Endothelial cell of umbilical vein (primary cell): ENCODE measurements at regions of chr3 and their contacts with region 1.

Region 1: DNA sequence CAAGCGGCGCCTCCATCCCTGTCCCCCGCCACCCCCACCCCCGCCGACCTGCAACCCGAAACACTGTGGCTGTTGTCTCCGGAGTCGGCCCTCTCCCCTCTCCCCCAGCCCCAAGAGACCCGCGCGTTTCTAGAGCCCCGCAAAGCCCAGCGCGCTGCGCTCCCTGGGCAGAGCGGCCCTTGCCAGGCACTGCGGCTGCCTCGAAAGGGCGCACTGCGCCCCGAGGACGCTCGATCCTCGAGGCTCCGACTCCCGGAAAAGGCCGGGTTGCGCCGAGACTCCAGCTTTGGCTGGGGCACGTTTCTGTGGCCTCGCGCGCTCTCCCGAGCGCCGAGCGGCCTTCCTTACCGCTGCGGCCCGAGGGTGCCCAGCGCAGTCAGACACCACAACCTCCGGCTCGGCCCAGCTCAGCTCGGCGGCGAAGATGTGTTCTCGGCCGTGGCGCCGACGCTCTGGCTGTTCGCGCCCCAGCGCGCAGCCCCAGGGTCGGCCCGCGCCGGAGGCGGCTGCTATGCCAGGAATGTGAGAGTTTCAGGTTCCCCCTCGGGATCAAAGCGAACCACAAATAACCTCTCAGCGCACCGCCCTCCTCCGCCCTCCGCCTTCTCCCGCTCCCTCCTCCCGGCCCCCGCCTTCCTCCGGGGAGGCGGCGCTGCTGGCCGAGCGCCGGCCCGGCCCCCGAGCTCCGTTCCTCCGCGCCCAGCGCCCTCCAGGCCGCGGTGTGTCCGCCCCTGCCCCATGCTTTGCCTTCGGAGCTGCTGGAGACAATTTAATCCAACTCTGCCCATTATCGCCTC is at the start of gene AMOTL2:
- DNase-seq: peak; percentile 93
- H3K4me3 ChIP-seq: peak within 1 kb of the TSS; percentile 65 to 93 (median 73)
- H3K27ac ChIP-seq: peak within 1 kb of the TSS; percentile 99
- H3K4me1 ChIP-seq: peaks cover 47% of the 10 kb centered on the region
- H3K27me3 ChIP-seq: no peaks in the 10 kb centered on the region
- CTCF ChIP-seq: no peak
- POLR2A ChIP-seq: peak; percentile 99
- total RNA-seq, gene AMOTL2: 145 and 167 TPM in 2 replicates

Region 2: DNA sequence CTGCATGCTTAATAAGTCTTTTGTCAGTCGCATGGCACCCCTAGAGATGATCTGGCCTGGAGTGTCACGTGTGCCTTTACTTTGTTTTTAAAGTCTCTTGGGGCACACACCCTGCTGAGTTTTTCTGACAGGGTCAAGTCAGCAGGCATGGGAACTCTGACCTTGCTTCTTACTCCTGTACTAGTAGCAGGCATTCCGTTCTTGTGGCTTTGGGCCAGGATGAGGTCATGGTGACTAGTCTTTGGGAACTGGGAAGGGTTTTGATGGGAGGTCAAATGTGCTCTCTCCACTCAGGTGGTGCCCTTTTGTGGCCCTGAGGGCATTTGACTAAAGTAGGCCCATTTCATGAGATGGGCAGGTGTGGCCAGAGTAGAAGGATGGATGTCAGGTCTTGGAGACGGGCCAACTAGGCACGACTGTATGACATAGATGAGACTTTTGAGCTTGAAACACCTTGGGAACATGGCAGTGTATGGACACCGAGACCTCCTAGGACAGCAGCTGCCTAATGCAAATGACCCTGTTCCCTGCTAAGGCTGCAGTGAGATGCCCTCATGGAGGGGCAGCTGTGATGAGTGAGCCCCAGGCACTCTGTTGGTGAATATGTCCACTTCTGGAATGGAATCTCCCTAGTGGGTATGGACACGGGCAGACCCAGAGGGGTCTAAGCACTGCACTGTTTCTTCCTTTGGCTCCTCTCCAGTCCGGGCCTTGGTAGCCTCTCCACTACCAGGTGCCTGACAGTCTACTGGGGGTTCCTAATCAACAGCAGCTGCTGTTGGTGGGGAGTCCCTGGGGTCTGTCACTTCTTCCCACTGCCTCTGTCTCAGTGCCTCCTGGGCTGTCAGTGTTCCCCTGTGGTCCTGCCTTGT is 552.2 kb before region 1 on chr3:
- CTCF ChIA-PET with region 1: no interaction called
- POLR2A ChIA-PET with region 1: no interaction called
- dilution Hi-C with region 1: no loop called
- intact Hi-C with region 1: no loop called
- DNase-seq: peak; percentile 44
- H3K4me3 ChIP-seq: no peak overlapping the region
- H3K27ac ChIP-seq: no peak overlapping the region
- H3K4me1 ChIP-seq: no peaks in the 10 kb centered on the region
- H3K27me3 ChIP-seq: no peaks in the 10 kb centered on the region
- CTCF ChIP-seq: peak in 1 of 2 donors; percentile 18
- POLR2A ChIP-seq: no peak

Region 3: DNA sequence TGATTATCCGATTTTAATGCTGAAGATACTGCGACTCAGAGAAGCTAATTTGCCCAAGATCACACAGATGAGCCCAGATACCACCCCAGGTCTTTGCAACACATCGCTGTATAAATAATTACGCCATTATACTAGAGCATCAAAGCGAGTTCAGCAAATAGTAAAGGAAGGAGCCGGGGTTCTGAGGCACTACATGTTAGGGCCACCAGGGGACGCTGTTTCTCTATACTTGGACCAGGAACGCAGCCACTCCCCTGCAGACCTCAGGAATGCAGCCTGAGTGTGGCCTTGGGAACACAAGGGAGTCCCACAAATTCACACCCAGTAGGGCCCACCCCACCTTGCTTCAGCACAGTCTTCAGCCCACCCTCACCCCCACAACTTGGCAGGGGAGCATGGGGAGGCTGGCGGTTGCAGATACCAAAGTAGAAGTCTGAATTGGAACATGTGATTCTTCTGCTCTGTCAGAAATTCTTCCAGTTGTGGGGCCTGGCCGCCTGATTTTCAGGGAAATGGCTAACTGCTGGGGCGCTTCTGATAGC is 65.8 kb before region 1 on chr3:
- CTCF ChIA-PET with region 1: interaction called, 60 read pairs
- POLR2A ChIA-PET with region 1: interaction called, 6 read pairs
- dilution Hi-C with region 1: no loop called
- intact Hi-C with region 1: loop called (anchors 1 kb)
- DNase-seq: peak; percentile 84
- H3K4me3 ChIP-seq: no peak overlapping the region
- H3K27ac ChIP-seq: no peak overlapping the region
- H3K4me1 ChIP-seq: peaks cover 3% of the 10 kb centered on the region
- H3K27me3 ChIP-seq: peaks cover 0 to 6% of the 10 kb centered on the region in 2 experiments
- CTCF ChIP-seq: peak; percentile 95 to 97
- POLR2A ChIP-seq: no peak

Region 4: DNA sequence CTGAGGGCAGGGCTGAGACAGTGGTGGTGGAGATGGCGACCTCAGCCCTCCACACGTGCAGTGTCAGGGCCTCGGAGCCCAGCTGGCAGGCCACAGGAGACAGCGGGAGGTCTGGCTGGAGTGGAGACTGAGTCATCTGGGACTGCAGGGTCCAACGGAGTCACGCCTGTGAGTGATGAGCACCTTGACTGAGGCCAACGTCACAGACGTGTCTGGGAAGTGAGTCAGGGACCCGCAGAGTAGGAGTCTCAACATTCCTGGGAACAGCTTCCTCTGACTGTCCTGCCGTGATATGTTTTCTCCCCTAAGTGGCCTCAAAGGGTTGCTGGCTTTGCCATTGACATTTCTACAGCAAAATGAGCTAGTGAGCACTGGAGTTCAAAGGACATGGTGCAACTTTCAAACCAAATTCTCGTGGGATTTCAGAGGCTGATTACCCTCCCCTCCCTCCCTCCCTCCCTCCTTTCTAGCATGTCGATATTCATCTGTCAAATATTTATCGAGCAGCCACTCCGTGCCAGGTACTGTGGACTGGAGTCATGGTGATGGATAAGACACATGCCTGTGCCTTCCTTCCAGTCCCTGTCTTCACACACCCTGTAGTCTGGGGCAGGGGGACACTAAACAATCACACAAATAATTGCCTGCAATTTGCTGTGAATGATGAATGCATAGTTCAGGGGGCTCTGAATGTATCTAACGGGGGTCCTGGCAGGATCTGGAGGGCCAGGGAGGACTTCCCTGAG is 53.4 kb after region 1 on chr3:
- CTCF ChIA-PET with region 1: interaction called, 3 read pairs
- POLR2A ChIA-PET with region 1: interaction called, 3 read pairs
- dilution Hi-C with region 1: no loop called
- intact Hi-C with region 1: loop called (anchors 1 kb)
- DNase-seq: peak; percentile 77
- H3K4me3 ChIP-seq: no peak overlapping the region
- H3K27ac ChIP-seq: peak overlapping the region; percentile 73
- H3K4me1 ChIP-seq: peaks cover 8% of the 10 kb centered on the region
- H3K27me3 ChIP-seq: peaks cover 5 to 11% of the 10 kb centered on the region in 2 experiments
- CTCF ChIP-seq: no peak
- POLR2A ChIP-seq: no peak

Region 5: DNA sequence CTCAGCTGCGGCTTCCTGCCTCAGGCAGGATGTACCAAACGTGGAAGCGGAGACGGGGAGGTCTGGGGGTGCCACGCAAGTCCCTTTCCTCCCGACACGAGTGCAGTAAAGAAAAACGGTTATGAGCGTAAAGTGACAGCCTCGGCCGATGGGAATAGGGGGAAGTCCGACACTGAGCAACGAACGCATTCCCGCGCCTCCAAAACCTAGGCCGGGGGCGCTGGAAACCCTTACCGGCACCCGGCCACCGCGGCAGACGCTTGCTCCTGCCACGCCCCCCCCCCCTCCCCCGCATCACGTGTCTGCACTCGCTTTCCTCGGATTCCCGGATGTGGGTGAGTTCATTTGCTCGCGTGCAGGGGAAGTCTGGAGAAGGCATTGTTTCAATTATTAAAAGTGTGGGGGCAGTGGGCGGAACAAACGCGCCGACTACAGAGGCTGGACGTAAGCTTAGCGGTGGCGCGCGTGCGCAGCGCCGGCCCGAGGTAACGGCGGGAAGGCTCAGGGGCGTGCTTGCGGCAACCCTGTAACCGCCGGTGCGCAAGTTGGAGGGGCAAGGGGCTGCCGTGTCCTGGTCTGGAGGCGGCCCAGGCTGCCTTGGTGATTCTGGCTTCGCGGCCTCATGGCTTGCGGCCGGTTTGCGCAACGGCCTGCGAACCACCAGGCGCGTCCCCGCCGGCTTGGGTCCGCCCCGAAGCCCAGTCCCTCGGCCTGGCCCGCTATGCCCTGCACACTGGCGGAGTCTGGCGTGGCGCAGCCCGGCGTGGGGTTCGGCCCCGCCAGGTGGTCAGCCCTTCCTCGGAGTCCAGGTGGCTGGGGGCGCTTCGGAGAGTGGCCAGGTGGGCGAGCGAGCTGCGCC is 111.8 kb after region 1 on chr3 and contains the starts of genes ANAPC13 and CEP63:
- CTCF ChIA-PET with region 1: interaction called, 8 read pairs
- POLR2A ChIA-PET with region 1: interaction called, 10 read pairs
- dilution Hi-C with region 1: no loop called
- intact Hi-C with region 1: loop called (anchors 1 kb)
- DNase-seq: peak; percentile 99
- H3K4me3 ChIP-seq: peak within 1 kb of the TSS; percentile 75 to 88 (median 75)
- H3K27ac ChIP-seq: peak within 1 kb of the TSS; percentile 92
- H3K4me1 ChIP-seq: peaks cover 45% of the 10 kb centered on the region
- H3K27me3 ChIP-seq: no peaks in the 10 kb centered on the region
- CTCF ChIP-seq: no peak
- POLR2A ChIP-seq: peak; percentile 82
- total RNA-seq, gene ANAPC13: 50.8 and 58.6 TPM in 2 replicates
- total RNA-seq, gene CEP63: 24.9 and 29.4 TPM in 2 replicates